Testis (tissue), 5 donors: ENCODE measurements at regions of chr17 and their contacts with region 1.

Region 1: GRCh38 chr17:33049781-33050414 is 58.3 kb downstream of the SPACA3 start:
- DNase-seq: peak; percentile 78
- H3K4me3 ChIP-seq: no peak overlapping the region
- H3K27ac ChIP-seq: no peak overlapping the region
- H3K4me1 ChIP-seq: no peaks in the 10 kb centered on the region
- H3K27me3 ChIP-seq: no peaks in the 10 kb centered on the region
- CTCF ChIP-seq: peak in 2 of 3 experiments; percentile 69 to 88
- POLR2A ChIP-seq: no peak

Region 2: GRCh38 chr17:32755045-32755805 is 294.7 kb before region 1 on chr17:
- intact Hi-C with region 1: no loop called
- DNase-seq: no peak
- H3K4me3 ChIP-seq: no peak overlapping the region
- H3K27ac ChIP-seq: no peak overlapping the region
- H3K4me1 ChIP-seq: peaks cover 6% of the 10 kb centered on the region
- H3K27me3 ChIP-seq: no peaks in the 10 kb centered on the region
- CTCF ChIP-seq: peak; percentile 49 to 78 (median 75)
- POLR2A ChIP-seq: no peak

Region 3: GRCh38 chr17:33667052-33667509 is 617.2 kb after region 1 on chr17:
- intact Hi-C with region 1: loop called (anchors 10 kb)
- DNase-seq: no peak
- H3K4me3 ChIP-seq: no peak overlapping the region
- H3K27ac ChIP-seq: no peak overlapping the region
- H3K4me1 ChIP-seq: peaks cover 4% of the 10 kb centered on the region
- H3K27me3 ChIP-seq: no peaks in the 10 kb centered on the region
- CTCF ChIP-seq: no peak
- POLR2A ChIP-seq: no peak